ENCODE measurements at regions of chr12 and their contacts with region 1.

Region 1: GRCh38 chr12:21677622-21678277 is 20.1 kb upstream of the LDHB start:
- DNase-seq: no peak
- H3K4me3 ChIP-seq: no peak overlapping the region
- H3K4me3 Mint-ChIP-seq: no peak overlapping the region
- H3K27ac Mint-ChIP-seq: no peak overlapping the region
- H3K4me1 ChIP-seq: no peaks in the 10 kb centered on the region; the same call in 1 of the 2 replicates
- H3K4me1 Mint-ChIP-seq: peaks cover 20% of the 10 kb centered on the region
- H3K27me3 ChIP-seq: no peaks in the 10 kb centered on the region
- H3K27me3 Mint-ChIP-seq: no peaks in the 10 kb centered on the region
- CTCF ChIP-seq: no peak

Region 2: GRCh38 chr12:21296751-21297406 is 380.9 kb before region 1 on chr12:
- CTCF ChIA-PET with region 1: no interaction called
- POLR2A ChIA-PET with region 1: no interaction called
- intact Hi-C with region 1: loop called (anchors 1 kb)
- DNase-seq: peak in 1 of 2 experiments; percentile 27
- H3K4me3 ChIP-seq: no peak overlapping the region
- H3K4me3 Mint-ChIP-seq: no peak overlapping the region
- H3K27ac Mint-ChIP-seq: no peak overlapping the region
- H3K4me1 ChIP-seq: no peaks in the 10 kb centered on the region
- H3K4me1 Mint-ChIP-seq: no peaks in the 10 kb centered on the region
- H3K27me3 ChIP-seq: no peaks in the 10 kb centered on the region
- H3K27me3 Mint-ChIP-seq: peaks cover 3% of the 10 kb centered on the region
- CTCF ChIP-seq: peak; percentile 87 to 90

Region 3: GRCh38 chr12:21438643-21439042 is 239.1 kb before region 1 on chr12:
- CTCF ChIA-PET with region 1: no interaction called
- POLR2A ChIA-PET with region 1: no interaction called
- intact Hi-C with region 1: loop called (anchors 1 kb)
- DNase-seq: no peak
- H3K4me3 ChIP-seq: no peak overlapping the region; the same call in 1 of the 2 replicates
- H3K4me3 Mint-ChIP-seq: peak overlapping the region; percentile 85
- H3K27ac Mint-ChIP-seq: peak overlapping the region; percentile 81
- H3K4me1 ChIP-seq: peaks cover 9% of the 10 kb centered on the region
- H3K4me1 Mint-ChIP-seq: peaks cover 8% of the 10 kb centered on the region
- H3K27me3 ChIP-seq: peaks cover 5% of the 10 kb centered on the region
- H3K27me3 Mint-ChIP-seq: peaks cover 22% of the 10 kb centered on the region
- CTCF ChIP-seq: no peak

Region 4: DNA sequence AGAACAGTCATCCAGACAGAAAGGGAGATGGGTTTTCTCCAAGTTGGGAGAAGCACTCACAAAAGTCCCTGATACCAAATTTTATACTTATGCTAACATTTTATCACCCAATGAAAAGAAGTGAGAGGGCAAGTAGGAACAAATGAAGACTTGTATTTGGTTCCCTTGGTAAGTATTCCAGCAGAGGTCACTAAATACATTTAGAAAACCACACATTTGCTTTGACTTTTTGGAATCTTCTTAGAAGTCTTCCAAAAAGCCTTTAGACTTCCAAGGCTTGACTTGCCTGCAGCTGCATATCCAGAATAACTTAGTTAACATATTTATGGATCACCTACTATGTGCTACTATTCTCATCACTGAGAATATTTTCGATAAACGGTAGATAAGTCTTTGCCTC is 70.0 kb before region 1 on chr12:
- CTCF ChIA-PET with region 1: interaction called, 7 read pairs
- POLR2A ChIA-PET with region 1: no interaction called
- intact Hi-C with region 1: loop called (anchors 1 kb)
- DNase-seq: peak in 1 of 2 experiments; percentile 40
- H3K4me3 ChIP-seq: no peak overlapping the region
- H3K4me3 Mint-ChIP-seq: no peak overlapping the region
- H3K27ac Mint-ChIP-seq: no peak overlapping the region
- H3K4me1 ChIP-seq: peaks cover 23% of the 10 kb centered on the region
- H3K4me1 Mint-ChIP-seq: peaks cover 7% of the 10 kb centered on the region
- H3K27me3 ChIP-seq: no peaks in the 10 kb centered on the region
- H3K27me3 Mint-ChIP-seq: no peaks in the 10 kb centered on the region
- CTCF ChIP-seq: peak; percentile 48 to 49

Region 5: DNA sequence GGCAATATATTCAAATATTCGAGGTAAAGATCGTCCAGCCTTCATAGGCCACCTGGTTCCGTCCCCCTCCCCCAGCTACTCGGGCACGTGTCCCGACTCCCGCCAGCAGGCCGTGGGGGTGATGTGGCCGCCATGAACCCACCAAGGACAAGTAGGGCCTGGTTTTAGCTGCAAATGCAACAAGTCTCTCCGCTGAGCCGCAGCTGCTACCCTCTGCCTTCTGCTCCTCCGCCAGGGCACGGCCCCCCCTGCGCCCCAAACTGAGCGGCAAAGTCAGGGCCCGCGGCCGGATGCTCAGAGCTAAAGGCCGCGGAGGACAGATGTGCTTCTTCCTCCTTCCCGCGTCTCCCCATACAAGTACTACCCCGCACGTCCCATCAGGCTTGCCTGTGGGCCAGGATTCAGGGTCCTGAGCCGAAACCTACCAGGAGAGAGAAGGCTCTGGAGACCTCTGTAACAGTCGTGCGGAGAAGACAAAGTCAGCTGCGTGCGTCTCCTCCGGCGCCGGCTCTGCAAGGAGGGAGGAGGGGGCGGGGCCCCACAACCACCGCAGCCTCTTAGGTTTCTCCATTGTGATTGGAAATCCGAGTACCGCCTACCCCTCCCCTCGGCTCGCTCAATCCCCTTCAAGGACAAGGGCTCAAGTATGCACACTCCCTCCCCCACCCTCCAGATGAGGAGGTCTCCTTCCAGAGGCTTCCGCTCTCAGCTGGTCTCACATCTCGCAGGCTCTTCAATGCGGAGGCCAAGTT is 20.2 kb before region 1 on chr12 and contains the start of gene LDHB:
- CTCF ChIA-PET with region 1: interaction called, 8 read pairs
- POLR2A ChIA-PET with region 1: interaction called, 7 read pairs
- intact Hi-C with region 1: loop called (anchors 1 kb)
- DNase-seq: peak; percentile 99
- H3K4me3 ChIP-seq: peak within 1 kb of the TSS; percentile 78
- H3K4me3 Mint-ChIP-seq: peak within 1 kb of the TSS; percentile 85
- H3K27ac Mint-ChIP-seq: peak within 1 kb of the TSS; percentile 96
- H3K4me1 ChIP-seq: peaks cover 38% of the 10 kb centered on the region
- H3K4me1 Mint-ChIP-seq: peaks cover 32% of the 10 kb centered on the region
- H3K27me3 ChIP-seq: no peaks in the 10 kb centered on the region
- H3K27me3 Mint-ChIP-seq: no peaks in the 10 kb centered on the region
- CTCF ChIP-seq: no peak
- total RNA-seq, gene LDHB: 1,752 and 1,948 TPM in 2 replicates